Activated naive CD4-positive, alpha-beta T cell treated with anti-CD3 and anti-CD28 coated beads, Interleukin-2, amount 10 ng/mL, durations not matched to agents 7 days and 5 days (primary cell): ENCODE measurements at regions of chr16 and their contacts with region 1.

Region 1: DNA sequence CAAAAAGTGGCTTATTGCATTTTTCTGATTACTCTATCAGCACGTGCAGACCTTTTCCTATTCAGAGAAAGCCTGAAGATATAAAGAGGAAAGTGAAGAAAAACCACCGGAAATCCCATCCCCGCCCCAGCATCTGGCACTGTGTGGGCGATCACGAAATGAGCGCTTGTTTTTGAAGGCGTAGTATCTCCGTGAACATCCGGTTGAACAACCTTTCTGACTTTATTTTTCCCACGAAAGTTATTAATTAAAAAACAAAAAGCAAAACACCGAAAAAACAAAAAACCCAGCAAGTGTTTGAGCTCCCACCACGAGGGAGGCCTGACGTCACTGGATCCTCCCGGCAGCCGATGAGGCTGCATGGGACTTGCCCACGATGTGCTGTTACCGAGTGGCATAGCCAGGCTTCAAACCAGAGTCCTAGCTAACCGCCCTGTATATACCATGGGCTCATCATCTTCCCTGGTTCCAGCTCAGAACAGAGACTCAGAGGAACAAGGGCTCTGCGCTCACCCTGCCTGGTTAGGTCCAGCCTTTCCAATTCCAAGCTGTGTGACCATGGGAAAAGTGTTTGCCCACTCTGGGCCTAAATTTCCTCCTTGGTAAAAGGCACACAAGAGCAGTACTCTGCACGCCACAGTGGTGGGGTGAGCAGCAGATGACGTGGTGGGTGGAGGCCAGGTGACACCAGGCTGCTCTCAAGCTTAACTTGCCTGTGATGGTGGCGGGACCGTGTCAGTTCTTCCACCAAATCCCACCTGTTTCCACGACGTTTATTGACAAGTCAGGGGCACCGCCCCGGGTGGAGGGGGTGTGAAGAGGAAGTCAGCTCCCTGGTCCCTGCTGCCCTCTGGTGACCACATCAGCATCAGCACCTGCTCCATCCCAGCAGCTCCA is 34.3 kb upstream of the IL21R start:
- DNase-seq: peak; percentile 92
- H3K4me3 Mint-ChIP-seq: peak overlapping the region; percentile 50
- H3K27ac Mint-ChIP-seq: peak overlapping the region; percentile 99
- H3K4me1 Mint-ChIP-seq: peaks cover 80% of the 10 kb centered on the region
- H3K27me3 Mint-ChIP-seq: no peaks in the 10 kb centered on the region

Region 2: DNA sequence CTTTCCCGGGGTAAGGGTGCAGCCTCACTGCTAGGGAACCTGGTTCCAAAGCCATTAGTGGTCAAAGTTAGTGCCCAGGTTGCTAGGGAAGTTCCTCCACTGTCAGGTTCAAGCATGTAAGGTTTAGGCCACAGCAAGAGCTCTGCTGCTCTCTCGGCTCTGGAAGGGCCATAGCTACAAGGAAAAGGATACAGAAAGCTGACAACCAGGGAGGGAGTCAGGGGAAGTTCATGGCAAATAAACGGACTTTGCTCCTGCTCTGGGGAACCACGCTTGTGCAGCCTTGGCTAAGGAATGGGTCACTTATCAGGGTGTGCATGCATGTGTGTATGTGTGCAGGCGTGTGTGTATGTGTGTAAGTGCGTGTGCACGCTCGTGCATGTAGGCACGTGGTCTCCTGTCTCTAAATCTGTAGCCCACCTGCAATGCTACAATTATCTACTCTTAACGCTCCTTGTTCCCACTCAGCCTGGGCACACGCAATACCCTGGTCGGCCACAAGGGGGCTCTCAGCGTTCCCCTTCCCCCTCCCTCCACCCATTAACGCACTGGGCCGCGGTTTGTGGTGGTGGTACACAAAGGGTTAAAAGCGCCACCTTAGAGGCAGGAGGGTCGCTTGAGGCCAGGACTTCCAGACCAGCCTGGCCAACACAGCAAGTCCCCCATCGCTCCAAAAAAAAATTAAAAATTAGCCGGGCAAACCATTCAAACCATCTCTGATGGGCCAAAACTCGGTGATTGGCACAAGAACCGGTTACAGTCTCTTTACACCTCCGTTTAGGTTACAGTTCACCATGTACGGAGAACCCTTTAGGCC is 212.8 kb before region 1 on chr16:
- CTCF ChIA-PET with region 1: interaction called, 53 read pairs
- DNase-seq: peak; percentile 76
- H3K4me3 Mint-ChIP-seq: no peak overlapping the region
- H3K27ac Mint-ChIP-seq: no peak overlapping the region
- H3K4me1 Mint-ChIP-seq: peaks cover 16% of the 10 kb centered on the region
- H3K27me3 Mint-ChIP-seq: peaks cover 5% of the 10 kb centered on the region

Region 3: GRCh38 chr16:27169511-27170071 is 198.1 kb before region 1 on chr16:
- CTCF ChIA-PET with region 1: interaction called, 15 read pairs
- DNase-seq: peak; percentile 83
- H3K4me3 Mint-ChIP-seq: peak overlapping the region; percentile 20
- H3K27ac Mint-ChIP-seq: peak overlapping the region; percentile 84
- H3K4me1 Mint-ChIP-seq: peaks cover 68% of the 10 kb centered on the region
- H3K27me3 Mint-ChIP-seq: peaks cover 6% of the 10 kb centered on the region

Region 4: DNA sequence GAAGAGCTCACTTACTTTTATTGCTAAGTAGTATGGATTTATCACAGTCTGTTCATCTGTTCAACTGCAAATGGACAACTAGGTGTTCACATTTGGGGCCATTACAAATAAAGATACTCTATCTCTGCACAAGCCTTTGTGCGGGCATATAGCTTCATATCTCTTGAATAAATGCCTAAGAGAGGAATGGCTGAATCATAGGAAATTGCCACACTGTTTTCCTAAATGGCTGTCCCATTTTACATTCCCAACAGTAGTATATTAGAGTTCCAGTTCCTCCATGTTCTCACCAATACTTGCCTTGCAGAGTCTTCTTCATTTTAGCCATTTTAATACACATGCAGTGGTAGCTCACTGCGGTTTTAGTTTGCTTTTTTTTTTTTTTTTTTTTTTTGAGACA is 119.7 kb before region 1 on chr16:
- CTCF ChIA-PET with region 1: no interaction called
- DNase-seq: no peak
- H3K4me3 Mint-ChIP-seq: no peak overlapping the region
- H3K27ac Mint-ChIP-seq: no peak overlapping the region
- H3K4me1 Mint-ChIP-seq: peaks cover 65% of the 10 kb centered on the region
- H3K27me3 Mint-ChIP-seq: no peaks in the 10 kb centered on the region

Region 5: GRCh38 chr16:27301236-27301861 is 66.4 kb before region 1 on chr16:
- CTCF ChIA-PET with region 1: no interaction called
- DNase-seq: no peak
- H3K4me3 Mint-ChIP-seq: no peak overlapping the region
- H3K27ac Mint-ChIP-seq: no peak overlapping the region
- H3K4me1 Mint-ChIP-seq: peaks cover 16% of the 10 kb centered on the region
- H3K27me3 Mint-ChIP-seq: peaks cover 30% of the 10 kb centered on the region

Region 6: DNA sequence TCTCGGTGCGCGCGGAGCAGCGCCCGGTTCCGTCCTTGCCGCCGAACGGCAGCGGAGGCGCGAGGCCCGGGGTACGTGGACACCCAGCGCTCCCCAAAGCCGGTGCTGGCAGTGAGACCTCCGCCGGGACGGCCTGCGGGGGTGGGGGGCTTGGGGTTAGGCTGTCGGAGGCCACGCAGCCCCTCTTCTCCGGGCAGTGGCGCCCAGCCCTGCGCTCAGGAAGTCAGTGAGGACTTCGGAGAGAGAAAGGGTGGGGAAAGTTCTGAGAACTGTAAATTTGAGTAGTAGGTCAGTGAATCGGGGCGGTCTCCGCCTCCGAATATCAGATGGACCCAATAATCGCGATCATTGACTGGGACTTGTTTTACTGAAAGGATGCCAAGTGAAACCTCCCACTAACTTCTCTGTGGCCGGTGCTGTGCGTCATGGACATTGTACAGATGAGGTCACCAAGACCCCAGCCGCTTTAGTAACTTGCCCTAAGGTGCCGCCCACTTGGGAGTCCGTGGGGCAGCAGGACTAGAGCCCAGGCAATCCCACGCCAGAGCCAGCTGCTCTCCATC is 53.5 kb before region 1 on chr16:
- CTCF ChIA-PET with region 1: interaction called, 20 read pairs
- DNase-seq: peak; percentile 75
- H3K4me3 Mint-ChIP-seq: peak overlapping the region; percentile 94
- H3K27ac Mint-ChIP-seq: peak overlapping the region; percentile 95
- H3K4me1 Mint-ChIP-seq: peaks cover 41% of the 10 kb centered on the region
- H3K27me3 Mint-ChIP-seq: peaks cover 27% of the 10 kb centered on the region

Region 7: DNA sequence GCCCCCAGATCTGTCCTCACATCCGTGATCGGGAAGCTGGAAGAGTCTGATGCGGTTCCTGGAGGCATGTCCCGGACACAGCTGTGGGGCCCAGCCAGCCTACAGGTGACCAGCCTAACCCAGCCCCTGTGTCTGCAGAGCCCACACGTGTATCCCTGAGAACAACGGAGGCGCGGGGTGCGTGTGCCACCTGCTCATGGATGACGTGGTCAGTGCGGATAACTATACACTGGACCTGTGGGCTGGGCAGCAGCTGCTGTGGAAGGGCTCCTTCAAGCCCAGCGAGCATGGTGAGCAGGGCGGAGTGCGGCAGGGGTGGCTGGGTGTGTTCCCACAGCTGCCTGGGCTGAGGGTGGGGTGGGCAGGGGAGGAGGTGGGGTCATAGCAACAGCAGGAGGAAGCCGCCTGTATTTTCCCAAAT is 23.0 kb before region 1 on chr16:
- CTCF ChIA-PET with region 1: no interaction called
- DNase-seq: no peak
- H3K4me3 Mint-ChIP-seq: no peak overlapping the region
- H3K27ac Mint-ChIP-seq: peak overlapping the region; percentile 49
- H3K4me1 Mint-ChIP-seq: peaks cover 29% of the 10 kb centered on the region
- H3K27me3 Mint-ChIP-seq: no peaks in the 10 kb centered on the region

Region 8: GRCh38 chr16:27377666-27378485 is 10.2 kb after region 1 on chr16:
- CTCF ChIA-PET with region 1: interaction called, 19 read pairs
- DNase-seq: peak; percentile 46
- H3K4me3 Mint-ChIP-seq: peak overlapping the region; percentile 25
- H3K27ac Mint-ChIP-seq: peak overlapping the region; percentile 95
- H3K4me1 Mint-ChIP-seq: peaks cover 51% of the 10 kb centered on the region
- H3K27me3 Mint-ChIP-seq: no peaks in the 10 kb centered on the region

Region 9: DNA sequence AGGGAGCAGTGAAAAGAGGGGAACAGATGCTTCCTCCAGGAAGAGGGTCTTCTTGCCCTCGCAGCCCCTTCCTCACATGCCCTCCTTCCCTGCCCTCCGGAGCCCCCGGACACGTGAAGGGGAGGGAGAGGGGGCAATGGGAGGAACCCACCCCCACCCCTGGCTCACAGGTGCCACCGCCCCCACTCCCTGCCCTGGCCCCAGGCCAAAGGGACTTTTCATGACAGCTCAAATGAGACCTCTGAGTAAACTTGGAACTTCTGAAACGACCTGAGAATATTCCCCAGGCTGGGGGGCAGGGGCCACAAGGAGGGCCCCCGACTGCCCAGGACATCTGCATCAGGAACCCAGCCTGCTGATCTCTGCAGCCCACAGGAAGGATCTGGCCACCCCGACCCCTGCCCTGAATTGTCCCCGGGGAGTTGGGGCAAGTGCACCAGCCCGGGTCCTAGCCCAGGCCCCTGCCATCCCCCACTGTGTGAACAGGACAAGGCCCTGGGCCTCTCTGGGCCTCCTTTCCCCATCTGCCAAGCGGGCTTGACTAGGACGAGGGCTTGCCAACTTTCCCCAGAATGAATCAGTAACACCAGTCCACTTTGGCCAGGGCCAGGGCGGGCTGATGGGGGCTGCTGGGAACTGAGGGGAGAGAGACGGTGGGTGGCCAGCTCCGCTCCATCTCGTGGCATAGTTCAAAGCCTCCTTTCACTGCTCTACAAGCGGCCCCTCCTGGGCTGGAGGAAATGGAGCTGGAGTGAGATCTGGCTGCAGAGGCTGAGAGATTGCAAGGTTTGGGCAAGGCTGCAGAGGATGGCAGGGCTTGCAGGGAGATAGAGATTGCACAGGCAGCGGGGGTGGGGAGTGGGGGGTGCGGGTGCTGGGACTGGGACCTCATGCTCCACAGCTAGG is 38.1 kb after region 1 on chr16:
- CTCF ChIA-PET with region 1: interaction called, 15 read pairs
- DNase-seq: peak; percentile 59
- H3K4me3 Mint-ChIP-seq: peak overlapping the region; percentile 99
- H3K27ac Mint-ChIP-seq: peak overlapping the region; percentile 82
- H3K4me1 Mint-ChIP-seq: peaks cover 85% of the 10 kb centered on the region
- H3K27me3 Mint-ChIP-seq: peaks cover 4% of the 10 kb centered on the region